Caco-2 (cell line): ENCODE measurements at regions of chr16 and their contacts with region 1.

Region 1: DNA sequence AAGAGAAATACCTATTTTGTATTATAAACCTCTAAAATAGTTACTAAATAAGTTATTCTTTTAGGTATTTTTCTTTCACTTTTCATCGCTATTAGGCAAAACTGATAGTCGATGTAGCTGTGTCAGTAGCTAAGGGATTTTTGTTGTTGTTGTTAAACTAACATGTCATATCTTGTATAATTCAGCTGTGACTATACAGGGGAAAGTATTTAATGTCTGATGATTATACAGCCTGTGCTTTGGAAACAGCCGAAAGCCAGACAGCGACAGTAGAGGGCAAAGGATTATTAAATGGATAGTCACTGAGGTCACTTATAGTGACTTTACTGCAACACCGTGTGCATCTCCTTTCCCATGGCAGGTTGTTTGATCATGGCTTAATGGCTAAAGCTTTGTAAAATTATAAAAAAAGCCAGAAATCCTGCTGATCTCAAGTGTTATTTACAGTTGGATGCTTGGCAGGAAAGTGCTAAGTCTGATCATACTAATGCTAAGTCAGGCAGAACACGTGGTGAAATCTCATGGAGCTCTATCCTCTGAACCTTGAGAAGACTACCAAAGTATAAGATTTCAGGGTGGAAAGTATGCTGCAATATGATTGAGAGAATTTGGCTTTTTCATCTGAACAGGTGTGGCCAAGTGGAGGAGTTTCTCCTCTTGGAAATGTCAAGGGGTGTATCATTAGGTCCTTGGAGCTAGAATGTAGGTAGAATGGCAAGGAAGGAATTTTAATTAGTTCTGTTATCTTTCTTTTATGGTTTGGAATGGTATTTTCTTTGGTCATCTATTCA is 88.4 kb downstream of the FTO start:
- DNase-seq: peak; percentile 48 to 51
- H3K4me3 ChIP-seq: no peak overlapping the region
- H3K4me3 Mint-ChIP-seq: peak overlapping the region; percentile 33
- H3K27ac Mint-ChIP-seq: peak overlapping the region; percentile 72
- H3K4me1 ChIP-seq: peaks cover 21% of the 10 kb centered on the region
- H3K4me1 Mint-ChIP-seq: peaks cover 34% of the 10 kb centered on the region
- H3K27me3 ChIP-seq: no peaks in the 10 kb centered on the region
- H3K27me3 Mint-ChIP-seq: no peaks in the 10 kb centered on the region
- CTCF ChIP-seq: no peak

Region 2: DNA sequence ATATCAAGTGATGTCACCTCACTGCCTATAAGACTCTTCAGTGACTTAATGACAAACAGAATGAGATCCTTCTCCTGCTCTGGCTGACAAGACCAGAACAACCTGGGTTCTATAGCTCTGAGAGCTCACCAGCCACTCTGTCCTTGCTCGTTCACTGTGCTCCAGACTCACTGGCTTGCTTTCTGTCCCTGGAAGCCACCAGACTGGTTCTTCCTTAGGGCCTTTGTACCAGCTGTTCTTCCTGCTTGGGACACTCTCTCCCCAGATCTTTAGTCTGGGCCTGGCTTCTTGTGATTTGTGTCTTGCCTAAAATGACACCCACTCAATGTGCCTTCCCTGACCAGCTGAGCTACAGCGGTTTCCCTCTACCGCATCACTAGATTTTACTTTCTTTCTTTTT is 12.3 kb before region 1 on chr16:
- CTCF ChIA-PET with region 1: interaction called, 9 read pairs
- POLR2A ChIA-PET with region 1: no interaction called
- intact Hi-C with region 1: loop called (anchors 1 kb)
- DNase-seq: peak; percentile 62
- H3K4me3 ChIP-seq: no peak overlapping the region
- H3K4me3 Mint-ChIP-seq: peak overlapping the region; percentile 13
- H3K27ac Mint-ChIP-seq: peak overlapping the region; percentile 78
- H3K4me1 ChIP-seq: peaks cover 51% of the 10 kb centered on the region
- H3K4me1 Mint-ChIP-seq: peaks cover 51% of the 10 kb centered on the region
- H3K27me3 ChIP-seq: no peaks in the 10 kb centered on the region
- H3K27me3 Mint-ChIP-seq: no peaks in the 10 kb centered on the region
- CTCF ChIP-seq: no peak